ENCODE measurements at regions of chr20 and their contacts with region 1.

Region 1: DNA sequence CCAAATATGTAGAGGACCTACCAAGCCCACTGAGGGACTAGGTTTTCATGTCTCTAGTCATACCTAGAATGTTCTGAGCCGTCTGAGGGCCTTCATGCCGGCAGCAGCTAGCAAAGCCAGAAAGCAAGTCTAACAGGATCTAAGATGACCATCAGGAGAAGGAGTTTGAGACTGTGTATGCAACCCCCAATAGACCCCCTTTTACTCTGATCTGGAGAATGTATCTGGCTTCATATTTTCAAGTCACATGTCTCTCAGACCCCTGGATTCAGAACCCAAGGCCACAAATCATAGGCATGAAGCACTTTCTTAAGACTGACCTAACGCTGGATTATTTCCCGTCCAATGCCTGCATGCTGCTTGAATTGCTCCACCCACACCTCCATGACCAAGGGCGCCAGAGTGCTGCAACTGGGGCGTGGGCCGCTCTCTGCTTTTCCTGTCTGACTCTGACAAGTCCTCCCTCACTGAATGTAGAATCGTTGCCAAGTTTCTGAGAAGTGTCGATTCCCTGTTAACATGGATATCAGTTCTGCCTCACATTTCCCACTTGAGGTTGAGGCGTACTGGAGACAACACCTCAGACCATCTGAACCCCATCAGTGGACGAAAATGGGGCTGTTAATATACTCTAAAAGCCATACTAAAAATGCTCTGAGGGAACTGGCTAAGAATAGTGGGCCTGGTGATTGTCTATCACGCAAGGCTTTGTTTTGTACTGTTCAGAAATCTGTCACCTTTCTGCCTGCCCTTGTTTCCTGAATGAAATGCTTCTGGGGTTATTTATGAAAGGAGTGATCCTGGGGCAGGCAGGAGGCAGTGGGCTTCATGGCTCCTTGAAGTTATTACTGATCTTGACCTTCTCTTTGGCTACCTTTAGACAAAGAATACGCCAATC is 23.9 kb upstream of the ASXL1 start:
- DNase-seq: peak; percentile 84
- H3K4me3 Mint-ChIP-seq: peak overlapping the region; percentile 37
- H3K27ac Mint-ChIP-seq: peak overlapping the region; percentile 92
- H3K4me1 Mint-ChIP-seq: peaks cover 57% of the 10 kb centered on the region
- H3K27me3 Mint-ChIP-seq: no peaks in the 10 kb centered on the region

Region 2: GRCh38 chr20:32231847-32232246 is 102.4 kb before region 1 on chr20:
- CTCF ChIA-PET with region 1: interaction called, 3 read pairs
- POLR2A ChIA-PET with region 1: interaction called, 8 read pairs
- intact Hi-C with region 1: loop called (anchors 1 kb)
- DNase-seq: peak; percentile 75
- H3K4me3 Mint-ChIP-seq: peak overlapping the region; percentile 45
- H3K27ac Mint-ChIP-seq: peak overlapping the region; percentile 97
- H3K4me1 Mint-ChIP-seq: peaks cover 50% of the 10 kb centered on the region
- H3K27me3 Mint-ChIP-seq: no peaks in the 10 kb centered on the region

Region 3: GRCh38 chr20:32249030-32249738 is 85.1 kb before region 1 on chr20:
- CTCF ChIA-PET with region 1: no interaction called
- POLR2A ChIA-PET with region 1: no interaction called
- intact Hi-C with region 1: loop called (anchors 1 kb)
- DNase-seq: peak; percentile 55
- H3K4me3 Mint-ChIP-seq: no peak overlapping the region
- H3K27ac Mint-ChIP-seq: peak overlapping the region; percentile 89
- H3K4me1 Mint-ChIP-seq: peaks cover 55% of the 10 kb centered on the region
- H3K27me3 Mint-ChIP-seq: no peaks in the 10 kb centered on the region

Region 4: GRCh38 chr20:32285621-32286371 is 48.4 kb before region 1 on chr20:
- CTCF ChIA-PET with region 1: interaction called, 13 read pairs
- POLR2A ChIA-PET with region 1: interaction called, 39 read pairs
- intact Hi-C with region 1: loop called (anchors 1 kb)
- DNase-seq: peak; percentile 69
- H3K4me3 Mint-ChIP-seq: peak overlapping the region; percentile 62
- H3K27ac Mint-ChIP-seq: peak overlapping the region; percentile 91
- H3K4me1 Mint-ChIP-seq: peaks cover 85% of the 10 kb centered on the region
- H3K27me3 Mint-ChIP-seq: no peaks in the 10 kb centered on the region

Region 5: DNA sequence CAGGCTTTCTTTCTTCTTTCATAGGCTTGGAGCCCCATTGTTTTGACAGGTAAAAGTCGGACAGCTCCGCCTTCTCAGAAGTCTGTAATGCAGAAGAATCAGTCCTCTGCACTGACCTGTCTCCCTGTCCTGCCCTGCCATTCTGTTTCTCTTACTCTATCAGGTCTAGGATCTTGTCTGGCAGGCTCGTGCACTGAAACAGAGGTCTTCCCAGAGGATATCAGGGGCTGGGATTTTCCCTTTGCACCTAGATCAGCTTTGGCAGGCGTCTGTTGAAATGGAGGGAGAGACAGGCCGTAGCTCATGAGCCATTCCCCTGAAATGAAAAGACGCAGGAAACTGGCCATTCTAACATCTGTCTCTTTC is 31.7 kb before region 1 on chr20:
- CTCF ChIA-PET with region 1: no interaction called
- POLR2A ChIA-PET with region 1: no interaction called
- intact Hi-C with region 1: loop called (anchors 1 kb)
- DNase-seq: no peak
- H3K4me3 Mint-ChIP-seq: no peak overlapping the region
- H3K27ac Mint-ChIP-seq: peak overlapping the region; percentile 66
- H3K4me1 Mint-ChIP-seq: peaks cover 47% of the 10 kb centered on the region
- H3K27me3 Mint-ChIP-seq: no peaks in the 10 kb centered on the region

Region 6: GRCh38 chr20:32368925-32369324 is 34.7 kb after region 1 on chr20:
- CTCF ChIA-PET with region 1: no interaction called
- POLR2A ChIA-PET with region 1: interaction called, 5 read pairs
- intact Hi-C with region 1: loop called (anchors 5 kb)
- DNase-seq: no peak
- H3K4me3 Mint-ChIP-seq: no peak overlapping the region
- H3K27ac Mint-ChIP-seq: no peak overlapping the region
- H3K4me1 Mint-ChIP-seq: peaks cover 45% of the 10 kb centered on the region
- H3K27me3 Mint-ChIP-seq: no peaks in the 10 kb centered on the region

Region 7: GRCh38 chr20:32387252-32387651 is 53.0 kb after region 1 on chr20:
- CTCF ChIA-PET with region 1: no interaction called
- POLR2A ChIA-PET with region 1: no interaction called
- intact Hi-C with region 1: loop called (anchors 2 kb)
- DNase-seq: peak; percentile 31
- H3K4me3 Mint-ChIP-seq: no peak overlapping the region
- H3K27ac Mint-ChIP-seq: no peak overlapping the region
- H3K4me1 Mint-ChIP-seq: peaks cover 58% of the 10 kb centered on the region
- H3K27me3 Mint-ChIP-seq: no peaks in the 10 kb centered on the region

Region 8: DNA sequence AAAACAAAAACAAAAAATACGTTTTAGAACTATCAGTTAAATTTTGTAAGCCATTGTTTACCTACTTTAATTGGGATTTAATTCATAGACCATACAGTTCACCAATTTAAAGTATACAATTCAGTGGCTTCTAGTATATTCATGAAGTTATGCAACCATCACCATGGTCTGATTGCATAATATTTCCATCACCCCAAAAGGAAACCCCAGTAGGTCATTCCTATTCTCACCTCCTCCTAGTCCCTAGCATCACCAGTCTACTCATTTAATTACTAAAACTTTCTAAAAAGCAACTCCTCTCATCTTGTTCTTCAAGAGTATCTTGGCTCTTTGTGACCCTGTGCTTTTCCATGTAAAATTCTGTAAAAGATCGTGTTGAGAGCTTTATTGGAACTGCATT is 84.1 kb after region 1 on chr20:
- CTCF ChIA-PET with region 1: no interaction called
- POLR2A ChIA-PET with region 1: no interaction called
- intact Hi-C with region 1: no loop called
- DNase-seq: no peak
- H3K4me3 Mint-ChIP-seq: no peak overlapping the region
- H3K27ac Mint-ChIP-seq: no peak overlapping the region
- H3K4me1 Mint-ChIP-seq: peaks cover 39% of the 10 kb centered on the region
- H3K27me3 Mint-ChIP-seq: no peaks in the 10 kb centered on the region